Mammary epithelial cell (primary cell): ENCODE measurements at regions of chr20 and their contacts with region 1.

Region 1: DNA sequence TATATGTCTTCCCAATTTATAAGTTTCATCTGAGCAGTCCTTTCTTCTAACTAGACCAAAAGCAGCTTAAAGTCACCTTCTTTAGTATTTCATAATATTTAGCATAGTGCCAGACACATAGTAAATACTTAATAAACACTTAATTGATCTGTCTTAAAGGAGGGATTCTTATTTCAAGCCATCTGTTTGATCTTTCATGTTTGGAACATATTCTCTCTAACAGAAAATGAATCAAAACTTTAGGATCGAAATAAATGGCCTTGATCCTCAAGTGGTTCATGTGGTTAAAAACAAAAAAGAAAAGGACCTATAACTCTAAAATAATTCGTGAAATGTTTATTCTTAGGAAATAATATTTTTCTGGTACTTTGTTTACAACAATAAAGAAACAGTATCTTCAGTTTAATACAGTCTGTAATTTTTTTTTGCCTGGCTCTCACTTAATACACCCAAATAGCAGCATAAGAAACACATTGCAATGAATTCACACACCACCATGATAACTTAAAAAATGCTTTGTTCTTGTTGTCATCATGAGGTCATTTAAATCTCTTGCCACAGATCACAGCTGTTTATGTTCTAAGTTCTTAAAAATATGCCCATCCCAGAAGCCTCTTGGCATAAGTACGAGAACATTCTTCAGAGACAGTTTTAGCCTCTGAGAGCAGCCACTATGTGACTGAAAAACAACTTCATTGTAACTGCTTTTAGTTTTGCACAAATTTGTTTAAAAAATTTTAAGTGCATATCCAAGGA is 48.1 kb downstream of the ESF1 start:
- DNase-seq: no peak
- H3K4me3 ChIP-seq: no peak overlapping the region
- H3K27ac ChIP-seq: no peak overlapping the region
- H3K4me1 ChIP-seq: no peaks in the 10 kb centered on the region
- H3K27me3 ChIP-seq: no peaks in the 10 kb centered on the region
- CTCF ChIP-seq: no peak

Region 2: GRCh38 chr20:11951696-11952095 is 1784.9 kb before region 1 on chr20:
- CTCF ChIA-PET with region 1: interaction called, 10 read pairs
- dilution Hi-C with region 1: no loop called
- in situ Hi-C with region 1: no loop called
- intact Hi-C with region 1: no loop called
- DNase-seq: no peak
- H3K4me3 ChIP-seq: no peak overlapping the region
- H3K27ac ChIP-seq: no peak overlapping the region
- H3K4me1 ChIP-seq: no peaks in the 10 kb centered on the region
- H3K27me3 ChIP-seq: no peaks in the 10 kb centered on the region
- CTCF ChIP-seq: no peak